ENCODE measurements at regions of chr17 and their contacts with region 1.

Region 1: DNA sequence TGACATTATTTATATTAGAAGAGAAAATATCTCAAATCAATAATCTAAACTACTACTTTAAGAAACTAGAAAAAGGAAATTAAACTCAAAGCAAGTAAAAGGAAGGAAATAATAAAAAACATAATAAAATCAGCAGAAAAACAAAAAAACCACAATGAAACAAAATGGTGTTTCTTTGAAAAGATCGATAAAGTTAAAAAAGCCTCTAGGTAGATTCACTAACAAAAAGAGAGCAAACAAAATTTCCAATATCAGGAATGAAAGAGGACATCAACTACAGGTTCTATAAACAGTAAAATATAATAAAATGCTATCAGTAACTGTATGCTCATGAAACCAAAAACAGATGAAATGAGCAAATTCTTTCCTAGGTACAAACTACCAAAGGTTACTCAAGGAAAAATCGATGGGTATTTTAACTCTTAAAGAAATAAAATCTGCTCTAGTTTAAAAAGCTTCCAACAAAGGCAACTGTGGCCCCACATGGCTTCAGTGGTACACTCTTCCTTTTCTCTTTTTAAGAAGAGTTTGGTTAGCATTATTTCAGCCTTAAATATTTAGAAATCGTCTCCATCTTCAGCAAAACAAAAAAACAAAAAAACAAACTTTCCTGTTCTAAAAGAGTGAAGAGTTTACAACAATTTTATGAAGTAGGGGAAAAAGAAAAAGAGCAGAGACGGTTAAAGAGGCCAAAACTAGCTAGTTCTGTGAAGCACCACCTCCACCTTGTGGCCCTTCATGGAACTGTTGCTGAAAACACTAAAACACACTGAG is 102.2 kb downstream of the TRIM37 start:
- DNase-seq: peak; percentile 79
- ATAC-seq: peak; percentile 48
- H3K4me3 Mint-ChIP-seq: no peak overlapping the region
- H3K27ac Mint-ChIP-seq: peak overlapping the region; percentile 77
- H3K4me1 Mint-ChIP-seq: peaks cover 37% of the 10 kb centered on the region
- H3K27me3 Mint-ChIP-seq: no peaks in the 10 kb centered on the region

Region 2: GRCh38 chr17:58517734-58518609 is 486.6 kb before region 1 on chr17:
- CTCF ChIA-PET with region 1: interaction called, 20 read pairs
- DNase-seq: peak; percentile 100
- ATAC-seq: peak; percentile 86
- H3K4me3 Mint-ChIP-seq: peak overlapping the region; percentile 86
- H3K27ac Mint-ChIP-seq: peak overlapping the region; percentile 93
- H3K4me1 Mint-ChIP-seq: peaks cover 49% of the 10 kb centered on the region
- H3K27me3 Mint-ChIP-seq: peaks cover 3% of the 10 kb centered on the region

Region 3: GRCh38 chr17:58577642-58578091 is 426.9 kb before region 1 on chr17:
- CTCF ChIA-PET with region 1: interaction called, 10 read pairs
- DNase-seq: peak; percentile 70
- ATAC-seq: peak; percentile 61
- H3K4me3 Mint-ChIP-seq: no peak overlapping the region
- H3K27ac Mint-ChIP-seq: no peak overlapping the region
- H3K4me1 Mint-ChIP-seq: peaks cover 4% of the 10 kb centered on the region
- H3K27me3 Mint-ChIP-seq: no peaks in the 10 kb centered on the region

Region 4: GRCh38 chr17:58587702-58588254 is 416.7 kb before region 1 on chr17:
- CTCF ChIA-PET with region 1: interaction called, 16 read pairs
- DNase-seq: peak; percentile 66
- ATAC-seq: peak; percentile 76
- H3K4me3 Mint-ChIP-seq: no peak overlapping the region
- H3K27ac Mint-ChIP-seq: no peak overlapping the region
- H3K4me1 Mint-ChIP-seq: peaks cover 1% of the 10 kb centered on the region
- H3K27me3 Mint-ChIP-seq: peaks cover 15% of the 10 kb centered on the region

Region 5: GRCh38 chr17:58710936-58711775 is 293.4 kb before region 1 on chr17:
- CTCF ChIA-PET with region 1: interaction called, 24 read pairs
- DNase-seq: no peak
- ATAC-seq: no peak
- H3K4me3 Mint-ChIP-seq: no peak overlapping the region
- H3K27ac Mint-ChIP-seq: no peak overlapping the region
- H3K4me1 Mint-ChIP-seq: peaks cover 19% of the 10 kb centered on the region
- H3K27me3 Mint-ChIP-seq: no peaks in the 10 kb centered on the region

Measured in activated CD8-positive, alpha-beta memory T cell treated with anti-CD3 and anti-CD28 coated beads, Interleukin-2, amount 10 ng/mL, durations not matched to agents 7 days and 5 days (primary cell).